Calu3 (cell line): ENCODE measurements at regions of chr1 and their contacts with region 1.

Region 1: DNA sequence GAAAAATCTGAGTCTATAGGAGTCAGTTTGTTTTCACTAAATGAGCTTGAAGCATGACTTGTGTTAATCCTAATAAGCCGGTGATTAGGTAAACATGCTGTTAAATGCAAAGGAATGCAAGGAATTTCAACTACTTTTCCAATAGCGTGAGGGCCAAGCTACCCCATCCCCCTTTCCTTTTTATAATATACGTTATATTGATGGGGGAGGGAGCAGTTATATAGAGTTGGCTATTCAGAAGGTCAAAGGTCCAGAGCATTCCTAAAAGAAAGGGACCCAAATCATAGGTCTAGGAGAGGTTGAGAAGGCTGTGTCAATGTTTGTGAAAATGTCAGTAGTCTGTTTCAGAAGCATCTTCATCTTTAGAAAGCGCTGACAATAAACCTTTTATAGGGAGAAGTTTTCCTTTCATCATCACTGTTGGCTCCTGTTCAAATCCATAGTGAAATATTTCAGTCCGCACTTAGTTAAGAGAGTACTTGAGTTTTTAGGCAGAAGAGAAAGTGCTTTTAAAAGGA is 3.8 kb downstream of the CCN1 start:
- DNase-seq: no peak
- H3K4me3 Mint-ChIP-seq: peak overlapping the region; percentile 36
- H3K27ac Mint-ChIP-seq: peak overlapping the region; percentile 85
- H3K4me1 Mint-ChIP-seq: peaks cover 34% of the 10 kb centered on the region
- H3K27me3 Mint-ChIP-seq: no peaks in the 10 kb centered on the region
- CTCF ChIP-seq: no peak

Region 2: GRCh38 chr1:85166351-85166750 is 418.0 kb before region 1 on chr1:
- CTCF ChIA-PET with region 1: no interaction called
- intact Hi-C with region 1: no loop called
- DNase-seq: no peak
- H3K4me3 Mint-ChIP-seq: no peak overlapping the region
- H3K27ac Mint-ChIP-seq: no peak overlapping the region
- H3K4me1 Mint-ChIP-seq: no peaks in the 10 kb centered on the region
- H3K27me3 Mint-ChIP-seq: no peaks in the 10 kb centered on the region
- CTCF ChIP-seq: no peak

Region 3: GRCh38 chr1:85681087-85681486 is 96.8 kb after region 1 on chr1:
- CTCF ChIA-PET with region 1: no interaction called
- intact Hi-C with region 1: no loop called
- DNase-seq: peak; percentile 4
- H3K4me3 Mint-ChIP-seq: no peak overlapping the region
- H3K27ac Mint-ChIP-seq: no peak overlapping the region
- H3K4me1 Mint-ChIP-seq: no peaks in the 10 kb centered on the region
- H3K27me3 Mint-ChIP-seq: no peaks in the 10 kb centered on the region
- CTCF ChIP-seq: no peak

Region 4: GRCh38 chr1:85692730-85693314 is 108.5 kb after region 1 on chr1:
- CTCF ChIA-PET with region 1: interaction called, 13 read pairs
- intact Hi-C with region 1: loop called (anchors 5 kb)
- DNase-seq: no peak
- H3K4me3 Mint-ChIP-seq: no peak overlapping the region
- H3K27ac Mint-ChIP-seq: peak overlapping the region; percentile 78
- H3K4me1 Mint-ChIP-seq: peaks cover 32% of the 10 kb centered on the region
- H3K27me3 Mint-ChIP-seq: no peaks in the 10 kb centered on the region
- CTCF ChIP-seq: no peak